ENCODE measurements at regions of chr12 and their contacts with region 1.

Region 1: DNA sequence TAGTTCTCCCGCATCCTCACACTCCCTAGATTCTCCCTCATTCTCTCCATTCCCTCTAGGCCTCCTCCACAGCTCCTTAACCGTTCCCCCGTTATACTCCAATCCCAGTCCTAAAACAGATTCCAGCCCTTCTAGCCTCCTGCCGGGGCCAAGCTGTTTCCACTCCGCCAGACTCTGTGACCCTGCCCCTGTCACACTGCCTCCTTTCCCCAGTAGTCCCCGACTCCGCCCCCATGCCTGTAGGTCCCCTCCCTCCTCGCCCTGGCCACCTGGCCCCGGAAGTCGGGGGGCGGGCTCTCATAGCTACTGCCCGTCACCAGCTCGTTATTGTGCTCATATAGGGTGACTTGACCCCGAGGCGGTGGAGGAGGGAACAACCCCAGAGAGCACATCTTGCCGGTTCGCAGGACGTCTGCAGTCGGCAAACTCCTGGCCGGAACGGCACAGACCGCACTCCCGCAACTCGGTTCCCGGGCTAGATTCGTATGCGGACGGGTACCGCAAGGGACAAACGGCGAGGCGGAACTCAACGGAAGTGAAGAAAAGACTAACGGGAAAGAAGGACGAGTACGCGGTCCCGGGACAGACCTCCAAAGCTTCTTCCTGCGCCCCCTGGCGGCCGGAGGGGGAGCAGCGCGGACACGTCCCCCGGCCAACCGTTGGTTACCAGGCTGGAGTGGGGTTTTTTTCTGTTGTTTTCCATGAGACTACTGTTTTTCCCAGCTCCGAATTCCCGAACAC is at the start of gene AAAS:
- DNase-seq: peak; percentile 96
- ATAC-seq: peak; percentile 85
- H3K4me3 Mint-ChIP-seq: peak within 1 kb of the TSS; percentile 96
- H3K27ac Mint-ChIP-seq: peak within 1 kb of the TSS; percentile 99
- H3K4me1 Mint-ChIP-seq: peaks cover 26% of the 10 kb centered on the region
- H3K27me3 Mint-ChIP-seq: peaks cover 37% of the 10 kb centered on the region
- CTCF ChIP-seq: peak; percentile 98
- total RNA-seq, gene AAAS: 95.8 to 104 TPM (median 98.9 TPM) in 3 replicates

Region 2: GRCh38 chr12:53098982-53099651 is 222.1 kb before region 1 on chr12:
- CTCF ChIA-PET with region 1: interaction called, 14 read pairs
- POLR2A ChIA-PET with region 1: no interaction called
- DNase-seq: peak; percentile 92
- ATAC-seq: peak; percentile 16
- H3K4me3 Mint-ChIP-seq: peak overlapping the region; percentile 90
- H3K27ac Mint-ChIP-seq: no peak overlapping the region
- H3K4me1 Mint-ChIP-seq: peaks cover 30% of the 10 kb centered on the region
- H3K27me3 Mint-ChIP-seq: peaks cover 54% of the 10 kb centered on the region
- CTCF ChIP-seq: peak; percentile 96

Region 3: DNA sequence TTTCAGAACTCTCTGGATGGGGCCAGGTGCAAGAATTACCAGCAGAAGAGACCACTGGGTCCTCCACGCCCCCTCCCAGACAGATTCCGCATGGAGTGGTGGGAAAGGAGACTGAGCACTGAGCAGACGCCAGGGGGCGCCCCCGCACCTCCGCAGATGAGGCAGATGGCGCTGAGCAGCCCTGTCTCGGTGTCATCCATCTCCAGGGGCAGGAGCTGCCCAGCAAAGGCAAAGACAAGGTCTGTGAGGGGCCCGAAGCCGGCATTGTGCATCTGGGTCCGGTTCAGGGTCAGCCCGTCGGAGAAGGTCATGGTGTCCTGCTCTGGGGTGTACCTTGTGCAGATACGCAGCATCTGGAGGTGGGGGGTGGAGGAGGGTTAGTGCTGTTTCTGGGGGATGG is 107.9 kb before region 1 on chr12:
- CTCF ChIA-PET with region 1: interaction called, 50 read pairs
- POLR2A ChIA-PET with region 1: no interaction called
- DNase-seq: peak; percentile 93
- ATAC-seq: peak; percentile 59
- H3K4me3 Mint-ChIP-seq: 0 out of 2 replicates have a peak overlapping the region, but pooled peaks have one; percentile 2
- H3K27ac Mint-ChIP-seq: peak overlapping the region; percentile 63; the same call in 1 of the 2 replicates
- H3K4me1 Mint-ChIP-seq: peaks cover 57% of the 10 kb centered on the region
- H3K27me3 Mint-ChIP-seq: no peaks in the 10 kb centered on the region
- CTCF ChIP-seq: peak; percentile 97

Region 4: GRCh38 chr12:53267999-53268647 is 53.1 kb before region 1 on chr12 and contains the start of gene ESPL1:
- CTCF ChIA-PET with region 1: interaction called, 19 read pairs
- POLR2A ChIA-PET with region 1: no interaction called
- DNase-seq: peak; percentile 89
- ATAC-seq: peak; percentile 88
- H3K4me3 Mint-ChIP-seq: peak within 1 kb of the TSS; percentile 100
- H3K27ac Mint-ChIP-seq: peak within 1 kb of the TSS; percentile 86
- H3K4me1 Mint-ChIP-seq: peaks cover 29% of the 10 kb centered on the region
- H3K27me3 Mint-ChIP-seq: no peaks in the 10 kb centered on the region; the same call in 1 of the 2 replicates
- CTCF ChIP-seq: peak; percentile 26; the same call in 1 of the 2 replicates
- total RNA-seq, gene ESPL1: 41.5 to 61.4 TPM (median 48.5 TPM) in 3 replicates

Region 5: GRCh38 chr12:53344824-53345485 is 23.7 kb after region 1 on chr12:
- CTCF ChIA-PET with region 1: interaction called, 148 read pairs
- POLR2A ChIA-PET with region 1: interaction called, 7 read pairs
- DNase-seq: peak; percentile 72
- ATAC-seq: peak; percentile 65
- H3K4me3 Mint-ChIP-seq: peak overlapping the region; percentile 96
- H3K27ac Mint-ChIP-seq: peak overlapping the region; percentile 79
- H3K4me1 Mint-ChIP-seq: peaks cover 13% of the 10 kb centered on the region
- H3K27me3 Mint-ChIP-seq: peaks cover 48% of the 10 kb centered on the region
- CTCF ChIP-seq: no peak

Region 6: GRCh38 chr12:53441040-53441833 is 120.0 kb after region 1 on chr12 and contains the start of gene PRR13:
- CTCF ChIA-PET with region 1: interaction called, 11 read pairs
- POLR2A ChIA-PET with region 1: interaction called, 4 read pairs
- DNase-seq: peak; percentile 99
- ATAC-seq: peak; percentile 99
- H3K4me3 Mint-ChIP-seq: peak within 1 kb of the TSS; percentile 94
- H3K27ac Mint-ChIP-seq: peak within 1 kb of the TSS; percentile 99
- H3K4me1 Mint-ChIP-seq: peaks cover 32% of the 10 kb centered on the region
- H3K27me3 Mint-ChIP-seq: no peaks in the 10 kb centered on the region
- CTCF ChIP-seq: no peak
- total RNA-seq, gene PRR13: 150 to 187 TPM (median 155 TPM) in 3 replicates

Region 7: DNA sequence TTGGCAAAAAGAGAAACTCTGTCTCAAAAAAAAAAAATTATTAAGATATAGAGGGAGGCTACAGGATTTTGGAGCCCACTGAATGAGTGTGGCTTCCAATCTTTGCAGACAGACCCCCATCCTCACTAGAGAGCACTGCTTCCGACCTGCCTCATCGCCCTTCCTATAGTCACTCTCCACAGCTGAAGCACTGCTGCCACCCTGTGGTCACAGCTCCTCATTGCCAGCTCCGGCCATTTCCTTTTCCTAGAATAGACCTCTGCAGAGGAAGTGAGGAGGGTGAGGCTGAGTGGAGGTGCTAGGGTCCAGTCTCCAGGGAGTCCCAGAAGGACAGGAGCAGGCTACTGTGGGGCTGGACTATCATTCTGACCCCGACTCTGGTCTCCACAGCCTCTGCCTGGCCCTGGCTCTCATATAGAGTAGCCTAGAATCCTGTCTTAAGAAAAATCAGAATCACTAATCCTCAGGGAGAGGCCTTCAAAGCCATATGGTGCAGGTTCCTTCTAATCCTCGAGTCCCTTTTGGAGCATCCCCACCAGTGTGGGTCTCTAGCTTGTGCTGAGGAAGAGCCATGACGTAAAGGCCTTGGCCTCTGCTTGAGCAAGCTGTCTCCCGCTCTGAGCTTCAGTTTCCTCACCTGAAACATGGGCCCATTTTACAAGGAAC is 187.4 kb after region 1 on chr12:
- CTCF ChIA-PET with region 1: interaction called, 24 read pairs
- POLR2A ChIA-PET with region 1: no interaction called
- DNase-seq: peak; percentile 94
- ATAC-seq: peak; percentile 93
- H3K4me3 Mint-ChIP-seq: no peak overlapping the region
- H3K27ac Mint-ChIP-seq: no peak overlapping the region
- H3K4me1 Mint-ChIP-seq: peaks cover 4% of the 10 kb centered on the region; the same call in 1 of the 2 replicates
- H3K27me3 Mint-ChIP-seq: no peaks in the 10 kb centered on the region
- CTCF ChIP-seq: peak; percentile 83